ENCODE measurements at regions of chr9 and their contacts with region 1.

Region 1: GRCh38 chr9:98074115-98074990 is 17.8 kb downstream of the NANS start:
- H3K4me3 ChIP-seq: no peak overlapping the region
- H3K27ac ChIP-seq: no peak overlapping the region
- H3K4me1 ChIP-seq: no peaks in the 10 kb centered on the region
- CTCF ChIP-seq: peak; percentile 63

Region 2: GRCh38 chr9:97710356-97711222 is 363.8 kb before region 1 on chr9:
- CTCF ChIA-PET with region 1: no interaction called
- POLR2A ChIA-PET with region 1: no interaction called
- H3K4me3 ChIP-seq: no peak overlapping the region
- H3K27ac ChIP-seq: no peak overlapping the region
- H3K4me1 ChIP-seq: no peaks in the 10 kb centered on the region
- CTCF ChIP-seq: no peak; the same call in 1 of the 2 replicates

Region 3: GRCh38 chr9:98056269-98057137 is 17.9 kb before region 1 on chr9 and contains the start of gene NANS:
- CTCF ChIA-PET with region 1: interaction called, 21 read pairs
- POLR2A ChIA-PET with region 1: interaction called, 16 read pairs
- H3K4me3 ChIP-seq: peak within 1 kb of the TSS; percentile 83
- H3K27ac ChIP-seq: peak within 1 kb of the TSS; percentile 47
- H3K4me1 ChIP-seq: no peaks in the 10 kb centered on the region
- CTCF ChIP-seq: peak; percentile 46; the same call in 1 of the 2 replicates

Region 4: GRCh38 chr9:98062151-98062550 is 12.2 kb before region 1 on chr9:
- CTCF ChIA-PET with region 1: interaction called, 21 read pairs
- POLR2A ChIA-PET with region 1: interaction called, 16 read pairs
- H3K4me3 ChIP-seq: no peak overlapping the region
- H3K27ac ChIP-seq: no peak overlapping the region
- H3K4me1 ChIP-seq: no peaks in the 10 kb centered on the region
- CTCF ChIP-seq: no peak

Region 5: GRCh38 chr9:98087420-98088354 is 13.3 kb after region 1 on chr9:
- CTCF ChIA-PET with region 1: interaction called, 22 read pairs
- POLR2A ChIA-PET with region 1: no interaction called
- H3K4me3 ChIP-seq: no peak overlapping the region
- H3K27ac ChIP-seq: no peak overlapping the region
- H3K4me1 ChIP-seq: no peaks in the 10 kb centered on the region; the same call in 1 of the 2 replicates
- CTCF ChIP-seq: no peak

Region 6: GRCh38 chr9:98159301-98159700 is 84.9 kb after region 1 on chr9:
- CTCF ChIA-PET with region 1: no interaction called
- POLR2A ChIA-PET with region 1: no interaction called
- H3K4me3 ChIP-seq: no peak overlapping the region
- H3K27ac ChIP-seq: no peak overlapping the region
- H3K4me1 ChIP-seq: no peaks in the 10 kb centered on the region
- CTCF ChIP-seq: no peak

Region 7: GRCh38 chr9:98172561-98173003 is 98.2 kb after region 1 on chr9:
- CTCF ChIA-PET with region 1: interaction called, 10 read pairs
- POLR2A ChIA-PET with region 1: no interaction called
- H3K4me3 ChIP-seq: no peak overlapping the region
- H3K27ac ChIP-seq: no peak overlapping the region
- H3K4me1 ChIP-seq: peaks cover 6% of the 10 kb centered on the region; the same call in 1 of the 2 replicates
- CTCF ChIP-seq: no peak

Region 8: GRCh38 chr9:98263482-98264357 is 189.4 kb after region 1 on chr9:
- CTCF ChIA-PET with region 1: interaction called, 48 read pairs
- POLR2A ChIA-PET with region 1: interaction called, 3 read pairs
- H3K4me3 ChIP-seq: no peak overlapping the region
- H3K27ac ChIP-seq: no peak overlapping the region
- H3K4me1 ChIP-seq: no peaks in the 10 kb centered on the region
- CTCF ChIP-seq: peak; percentile 75

Measured in HEK293 (cell line).